Natural killer cell (primary cell): ENCODE measurements at regions of chr5 and their contacts with region 1.

Region 1: DNA sequence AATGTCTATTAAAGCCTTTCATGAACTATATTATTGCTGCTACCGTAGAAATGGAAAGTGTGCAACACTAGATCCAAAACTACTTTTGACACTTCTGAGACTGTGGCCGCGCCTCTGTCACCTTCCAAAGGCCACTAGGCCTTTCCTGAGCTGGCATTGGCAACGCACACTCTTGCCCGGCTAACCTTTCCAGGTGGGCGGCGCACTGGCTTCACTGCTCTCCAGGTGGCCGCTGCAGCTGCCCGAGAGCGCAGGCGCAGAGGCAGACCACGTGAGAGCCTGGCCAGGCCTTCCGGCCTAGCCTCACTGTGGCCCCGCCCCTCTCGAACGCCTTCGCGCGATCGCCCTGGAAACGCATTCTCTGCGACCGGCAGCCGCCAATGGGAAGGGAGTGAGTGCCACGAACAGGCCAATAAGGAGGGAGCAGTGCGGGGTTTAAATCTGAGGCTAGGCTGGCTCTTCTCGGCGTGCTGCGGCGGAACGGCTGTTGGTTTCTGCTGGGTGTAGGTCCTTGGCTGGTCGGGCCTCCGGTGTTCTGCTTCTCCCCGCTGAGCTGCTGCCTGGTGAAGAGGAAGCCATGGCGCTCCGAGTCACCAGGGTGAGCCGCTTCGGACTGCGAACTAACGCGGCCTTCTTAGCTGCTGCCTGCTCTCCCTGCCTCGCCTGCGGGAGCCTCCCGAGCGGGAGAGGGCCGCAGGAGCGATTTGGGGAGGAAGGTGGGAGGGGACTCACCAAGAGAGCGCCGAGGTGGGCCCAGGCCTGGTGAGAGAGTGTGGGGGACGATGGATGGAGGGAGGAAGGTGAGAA is at the start of gene CCNB1:
- DNase-seq: peak; percentile 96 to 98
- ATAC-seq: peak; percentile 99 to 100 (median 100)
- H3K4me3 ChIP-seq: peak within 1 kb of the TSS; percentile 68
- H3K4me3 Mint-ChIP-seq: peak within 1 kb of the TSS; percentile 93
- H3K27ac ChIP-seq: peak within 1 kb of the TSS; percentile 56
- H3K27ac Mint-ChIP-seq: peak within 1 kb of the TSS; percentile 90 to 93
- H3K4me1 ChIP-seq: peaks cover 16% of the 10 kb centered on the region
- H3K4me1 Mint-ChIP-seq: peaks cover 24% of the 10 kb centered on the region in 2 donors
- H3K27me3 ChIP-seq: no peaks in the 10 kb centered on the region
- H3K27me3 Mint-ChIP-seq: no peaks in the 10 kb centered on the region
- CTCF ChIP-seq: no peak
- total RNA-seq, gene CCNB1: 2.8 to 5.2 (median 4.0) TPM

Region 2: DNA sequence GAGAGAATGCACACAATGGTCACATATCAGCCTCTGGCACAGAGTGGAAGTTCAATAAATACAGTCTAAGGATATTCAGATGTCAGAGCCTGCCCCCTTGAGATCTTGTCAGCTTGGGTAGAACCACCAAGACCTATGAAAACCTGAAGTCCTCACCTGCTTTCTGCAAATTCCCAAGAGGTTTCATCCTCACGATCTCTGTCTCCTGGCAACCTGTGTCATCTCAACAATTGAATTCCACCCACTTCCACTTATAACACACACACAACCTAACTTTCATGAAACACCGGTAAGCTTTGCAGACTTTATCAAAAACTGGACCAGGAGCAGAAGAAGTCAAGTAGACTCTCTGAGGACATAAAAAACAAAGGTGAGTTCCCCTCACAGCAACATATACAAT is 224.7 kb before region 1 on chr5:
- intact Hi-C with region 1: no loop called
- DNase-seq: no peak
- ATAC-seq: no peak
- H3K4me3 ChIP-seq: no peak overlapping the region
- H3K4me3 Mint-ChIP-seq: no peak overlapping the region
- H3K27ac ChIP-seq: no peak overlapping the region
- H3K27ac Mint-ChIP-seq: no peak overlapping the region
- H3K4me1 ChIP-seq: no peaks in the 10 kb centered on the region
- H3K4me1 Mint-ChIP-seq: no peaks in the 10 kb centered on the region
- H3K27me3 ChIP-seq: no peaks in the 10 kb centered on the region
- H3K27me3 Mint-ChIP-seq: peaks cover 10 to 13% of the 10 kb centered on the region in 2 donors
- CTCF ChIP-seq: no peak

Region 3: GRCh38 chr5:69189162-69190086 is 22.5 kb after region 1 on chr5 and contains the start of gene CENPH:
- intact Hi-C with region 1: loop called (anchors 1 kb)
- DNase-seq: peak; percentile 85 to 94
- ATAC-seq: peak; percentile 95 to 98 (median 97)
- H3K4me3 ChIP-seq: peak within 1 kb of the TSS; percentile 72
- H3K4me3 Mint-ChIP-seq: peak within 1 kb of the TSS; percentile 89
- H3K27ac ChIP-seq: peak within 1 kb of the TSS; percentile 65
- H3K27ac Mint-ChIP-seq: peak within 1 kb of the TSS; percentile 86 to 94
- H3K4me1 ChIP-seq: peaks cover 13% of the 10 kb centered on the region
- H3K4me1 Mint-ChIP-seq: peaks cover 10 to 14% of the 10 kb centered on the region in 2 donors
- H3K27me3 ChIP-seq: no peaks in the 10 kb centered on the region
- H3K27me3 Mint-ChIP-seq: no peaks in the 10 kb centered on the region
- CTCF ChIP-seq: no peak
- total RNA-seq, gene CENPH: 5.6 to 6.4 (median 5.6) TPM

Region 4: GRCh38 chr5:69217548-69218526 is 50.9 kb after region 1 on chr5:
- intact Hi-C with region 1: loop called (anchors 2 kb)
- DNase-seq: peak; percentile 92 to 97
- ATAC-seq: peak; percentile 91 to 99 (median 92)
- H3K4me3 ChIP-seq: peak overlapping the region; percentile 87
- H3K4me3 Mint-ChIP-seq: peak overlapping the region; percentile 100
- H3K27ac ChIP-seq: peak overlapping the region; percentile 83
- H3K27ac Mint-ChIP-seq: peak overlapping the region; percentile 98 to 99
- H3K4me1 ChIP-seq: peaks cover 4% of the 10 kb centered on the region
- H3K4me1 Mint-ChIP-seq: peaks cover 13 to 23% of the 10 kb centered on the region in 2 donors
- H3K27me3 ChIP-seq: no peaks in the 10 kb centered on the region
- H3K27me3 Mint-ChIP-seq: no peaks in the 10 kb centered on the region
- CTCF ChIP-seq: no peak

Region 5: GRCh38 chr5:69369369-69370121 is 202.7 kb after region 1 on chr5 and contains the starts of genes AK6, RAD17 and TAF9:
- intact Hi-C with region 1: loop called (anchors 2 kb)
- DNase-seq: peak; percentile 90 to 96
- ATAC-seq: peak; percentile 91 to 98 (median 91)
- H3K4me3 ChIP-seq: peak within 1 kb of the TSS; percentile 97
- H3K4me3 Mint-ChIP-seq: peak within 1 kb of the TSS; percentile 93
- H3K27ac ChIP-seq: peak within 1 kb of the TSS; percentile 98
- H3K27ac Mint-ChIP-seq: peak within 1 kb of the TSS; percentile 95 to 96
- H3K4me1 ChIP-seq: peaks cover 20% of the 10 kb centered on the region
- H3K4me1 Mint-ChIP-seq: peaks cover 27% of the 10 kb centered on the region in 2 donors
- H3K27me3 ChIP-seq: no peaks in the 10 kb centered on the region
- H3K27me3 Mint-ChIP-seq: no peaks in the 10 kb centered on the region
- CTCF ChIP-seq: no peak
- total RNA-seq, gene AK6: 5.8 to 10.8 (median 9.7) TPM
- total RNA-seq, gene RAD17: 24.4 to 34.3 (median 24.6) TPM
- total RNA-seq, gene TAF9: 38.3 to 53.8 (median 46.6) TPM